GM12878 (cell line): ENCODE measurements at regions of chr9 and their contacts with region 1.

Region 1: DNA sequence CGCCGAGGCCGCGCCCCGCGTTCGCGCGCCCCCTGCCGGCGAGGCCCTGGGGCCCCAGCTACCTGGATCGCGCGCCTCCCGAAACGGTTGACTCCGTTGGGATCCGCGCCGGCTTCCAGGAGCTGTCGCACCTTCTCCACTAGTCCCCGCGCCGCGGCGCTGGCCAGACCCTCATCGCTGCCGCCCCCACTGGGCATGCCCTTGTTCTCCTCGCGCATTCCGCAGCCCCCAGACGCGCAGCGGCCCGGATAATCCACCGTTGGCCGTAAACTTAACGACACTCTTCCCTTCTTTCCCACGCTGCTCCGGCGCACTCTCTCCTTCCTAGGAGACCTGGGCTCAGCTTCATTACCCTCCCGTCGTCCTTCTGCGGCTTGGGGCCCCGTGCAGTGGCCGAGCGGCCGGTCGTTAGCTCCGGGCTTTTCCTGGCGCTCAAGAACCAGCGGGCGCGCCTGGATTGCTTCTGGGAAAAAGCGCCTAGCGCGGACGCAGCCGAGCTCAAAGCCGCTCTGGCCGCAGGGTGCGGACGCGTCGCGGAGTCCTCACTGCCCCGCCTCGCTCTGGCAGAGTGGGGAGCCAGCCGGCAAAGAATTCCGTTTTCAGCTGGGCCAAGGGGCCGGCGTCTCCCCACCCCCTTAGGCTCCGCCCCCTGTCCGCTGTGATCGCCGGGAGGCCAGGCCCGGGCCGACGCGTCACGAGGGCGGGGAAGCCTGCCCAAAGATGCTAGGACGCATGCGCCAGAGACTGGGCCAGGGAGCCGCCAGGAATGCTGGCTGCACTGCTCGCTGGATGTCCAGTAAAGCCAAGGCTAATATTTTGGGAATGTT is at the start of gene CDKN2B:
- DNase-seq: no peak
- ATAC-seq: peak; percentile 98
- H3K4me3 ChIP-seq: peak within 1 kb of the TSS; percentile 66
- H3K27ac ChIP-seq: no peak within 1 kb of the TSS
- H3K4me1 ChIP-seq: peaks cover 10% of the 10 kb centered on the region
- H3K27me3 ChIP-seq: peaks cover 0 to 2% of the 10 kb centered on the region in 2 experiments; a peak in 1 of 4 replicates
- CTCF ChIP-seq: peak; percentile 87 to 88 (median 87)
- EP300 ChIP-seq: no peak
- POLR2A ChIP-seq: peak; percentile 59
- RAD21 ChIP-seq: peak; percentile 65
- polyA plus RNA-seq, gene CDKN2B: 0.04 to 0.08 TPM

Region 2: GRCh38 chr9:21852754-21853153 is 156.2 kb before region 1 on chr9:
- CTCF ChIA-PET with region 1: interaction called, 12 read pairs
- POLR2A ChIA-PET with region 1: no interaction called
- RAD21 ChIA-PET with region 1: no interaction called
- SMC1A ChIA-PET with region 1: interaction called, 5 read pairs
- in situ Hi-C with region 1: no loop called
- intact Hi-C with region 1: no loop called
- DNase-seq: peak; percentile 27
- ATAC-seq: peak; percentile 99
- H3K4me3 ChIP-seq: no peak overlapping the region
- H3K27ac ChIP-seq: no peak overlapping the region
- H3K4me1 ChIP-seq: peaks cover 5% of the 10 kb centered on the region; the same call in 1 of the 2 replicates
- H3K27me3 ChIP-seq: no peaks in the 10 kb centered on the region
- CTCF ChIP-seq: no peak
- EP300 ChIP-seq: peak in 1 of 2 experiments; percentile 72; a peak in 1 of 4 replicates
- POLR2A ChIP-seq: no peak
- RAD21 ChIP-seq: no peak

Region 3: DNA sequence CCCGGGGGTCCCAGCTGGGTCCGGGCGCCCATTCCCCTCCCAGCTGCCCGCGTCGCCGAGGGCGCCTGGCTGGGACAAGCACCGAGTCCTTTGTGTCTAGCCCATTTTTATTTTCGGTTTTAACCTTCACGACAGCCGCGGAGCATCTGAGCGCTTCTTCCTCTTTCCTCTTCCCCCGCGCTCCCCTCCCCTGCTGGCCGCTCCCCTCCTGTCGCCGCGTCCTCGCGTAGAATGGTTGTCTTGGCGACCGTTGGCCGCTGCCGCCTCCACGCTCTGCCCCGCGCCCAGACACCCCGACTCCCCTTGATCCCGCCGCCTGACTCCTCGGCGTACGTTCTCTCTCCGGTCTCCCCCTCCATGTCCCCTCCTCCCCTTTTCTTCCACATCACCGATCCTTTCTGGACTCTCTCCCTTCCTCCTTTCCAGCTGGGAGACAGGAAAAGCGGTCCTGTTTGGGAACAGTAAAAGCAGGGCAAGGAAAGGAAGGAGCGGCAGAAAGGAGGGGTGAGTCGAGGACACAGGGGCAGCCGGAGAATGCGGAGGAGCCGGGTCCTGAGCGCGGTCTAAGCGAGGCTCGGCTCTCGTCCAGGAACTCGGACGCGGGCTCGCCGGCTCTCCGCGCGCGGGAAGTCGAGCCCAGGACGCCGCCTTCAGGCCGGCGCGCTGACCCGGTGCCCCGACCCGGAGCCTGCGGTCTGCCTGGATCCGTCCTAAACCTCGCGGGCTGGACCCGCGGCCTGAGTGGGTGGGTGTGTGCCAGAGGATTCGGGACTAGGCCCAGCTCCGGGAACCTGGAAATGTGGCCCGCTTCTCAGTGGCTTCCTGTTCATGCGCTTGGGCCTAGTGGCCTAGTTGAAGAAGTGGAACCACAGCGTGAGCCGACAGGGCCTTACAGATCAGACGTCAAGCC is 13.5 kb before region 1 on chr9:
- CTCF ChIA-PET with region 1: interaction called, 54 read pairs
- POLR2A ChIA-PET with region 1: no interaction called
- RAD21 ChIA-PET with region 1: interaction called, 6 read pairs
- SMC1A ChIA-PET with region 1: interaction called, 16 read pairs
- in situ Hi-C with region 1: no loop called
- intact Hi-C with region 1: no loop called
- DNase-seq: peak; percentile 55
- ATAC-seq: peak; percentile 82
- H3K4me3 ChIP-seq: peak overlapping the region; percentile 89
- H3K27ac ChIP-seq: peak overlapping the region; percentile 91
- H3K4me1 ChIP-seq: peaks cover 4% of the 10 kb centered on the region; the same call in 1 of the 2 replicates
- H3K27me3 ChIP-seq: no peaks in the 10 kb centered on the region
- CTCF ChIP-seq: peak in 2 of 3 experiments; percentile 12 to 30; a peak in 4 of 6 replicates
- EP300 ChIP-seq: no peak
- POLR2A ChIP-seq: peak; percentile 69
- RAD21 ChIP-seq: no peak

Region 4: DNA sequence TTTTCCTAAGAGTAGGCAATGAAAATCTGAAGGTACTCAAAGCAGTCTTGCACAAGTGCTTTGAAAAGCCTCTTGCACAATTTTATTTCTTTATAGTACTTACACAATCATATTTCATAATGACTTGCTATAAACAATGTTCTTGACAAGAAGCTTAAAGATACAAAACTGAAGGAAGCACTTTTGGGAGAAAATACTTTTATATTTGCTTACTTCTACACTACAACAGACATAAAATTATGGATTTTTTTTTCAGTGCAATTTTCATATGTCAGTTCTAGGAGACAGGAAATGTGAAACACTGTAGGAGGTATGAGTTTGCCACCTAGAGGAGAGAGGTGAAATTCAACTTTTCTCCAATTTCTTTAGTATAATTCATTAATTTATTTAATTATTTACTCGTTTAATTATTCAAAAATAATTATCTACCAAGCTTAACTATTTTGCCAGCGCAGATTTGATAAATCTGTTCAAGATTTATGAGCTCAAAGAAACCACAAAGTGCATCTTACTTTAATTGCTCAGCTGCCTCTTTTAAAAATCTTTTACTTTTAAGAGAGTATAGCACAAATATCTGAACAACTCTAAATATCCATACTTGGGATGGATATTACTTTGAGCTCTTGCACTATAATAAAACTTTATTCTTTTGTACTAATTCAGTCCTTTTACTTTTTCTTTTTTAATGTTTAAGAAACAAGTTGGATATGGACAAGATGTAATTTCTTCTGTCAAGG is 29.2 kb after region 1 on chr9:
- CTCF ChIA-PET with region 1: interaction called, 80 read pairs
- POLR2A ChIA-PET with region 1: no interaction called
- RAD21 ChIA-PET with region 1: interaction called, 5 read pairs
- SMC1A ChIA-PET with region 1: interaction called, 29 read pairs
- in situ Hi-C with region 1: no loop called
- intact Hi-C with region 1: no loop called
- DNase-seq: no peak
- ATAC-seq: peak; percentile 53; the same call in 2 of the 3 replicates
- H3K4me3 ChIP-seq: no peak overlapping the region
- H3K27ac ChIP-seq: no peak overlapping the region
- H3K4me1 ChIP-seq: no peaks in the 10 kb centered on the region
- H3K27me3 ChIP-seq: no peaks in the 10 kb centered on the region; a peak in 1 of 4 replicates
- CTCF ChIP-seq: peak; percentile 30 to 48 (median 34); a peak in 4 of 6 replicates
- EP300 ChIP-seq: no peak
- POLR2A ChIP-seq: no peak
- RAD21 ChIP-seq: peak; percentile 76

Region 5: GRCh38 chr9:22169727-22170503 is 161.0 kb after region 1 on chr9:
- CTCF ChIA-PET with region 1: no interaction called
- POLR2A ChIA-PET with region 1: no interaction called
- RAD21 ChIA-PET with region 1: no interaction called
- SMC1A ChIA-PET with region 1: no interaction called
- in situ Hi-C with region 1: no loop called
- intact Hi-C with region 1: no loop called
- DNase-seq: no peak
- ATAC-seq: no peak
- H3K4me3 ChIP-seq: no peak overlapping the region
- H3K27ac ChIP-seq: no peak overlapping the region
- H3K4me1 ChIP-seq: peaks cover 3% of the 10 kb centered on the region; the same call in 1 of the 2 replicates
- H3K27me3 ChIP-seq: no peaks in the 10 kb centered on the region
- CTCF ChIP-seq: no peak
- EP300 ChIP-seq: no peak
- POLR2A ChIP-seq: no peak
- RAD21 ChIP-seq: no peak

Region 6: GRCh38 chr9:22238809-22239684 is 230.1 kb after region 1 on chr9:
- CTCF ChIA-PET with region 1: interaction called, 14 read pairs
- POLR2A ChIA-PET with region 1: no interaction called
- RAD21 ChIA-PET with region 1: interaction called, 8 read pairs
- SMC1A ChIA-PET with region 1: interaction called, 4 read pairs
- in situ Hi-C with region 1: no loop called
- intact Hi-C with region 1: no loop called
- DNase-seq: no peak
- ATAC-seq: peak; percentile 50
- H3K4me3 ChIP-seq: no peak overlapping the region
- H3K27ac ChIP-seq: no peak overlapping the region
- H3K4me1 ChIP-seq: peaks cover 19% of the 10 kb centered on the region
- H3K27me3 ChIP-seq: peaks cover 0 to 7% of the 10 kb centered on the region in 2 experiments; a peak in 2 of 4 replicates
- CTCF ChIP-seq: peak in 2 of 3 experiments; percentile 36 to 43; a peak in 4 of 6 replicates
- EP300 ChIP-seq: no peak
- POLR2A ChIP-seq: no peak
- RAD21 ChIP-seq: peak; percentile 37; the same call in 1 of the 2 replicates